HepG2 (cell line): ENCODE measurements at regions of chr21 and their contacts with region 1.

Region 1: GRCh38 chr21:41612674-41613532 is 104.9 kb upstream of the TMPRSS2 start:
- DNase-seq: peak; percentile 15
- ATAC-seq: peak; percentile 83
- H3K4me3 ChIP-seq: no peak overlapping the region
- H3K27ac ChIP-seq: no peak overlapping the region
- H3K4me1 ChIP-seq: peaks cover 11% of the 10 kb centered on the region
- H3K27me3 ChIP-seq: peaks cover 4 to 28% of the 10 kb centered on the region in 2 experiments; a peak in 3 of 5 replicates
- CTCF ChIP-seq: peak; percentile 87
- EP300 ChIP-seq: no peak
- POLR2A ChIP-seq: no peak
- RAD21 ChIP-seq: peak; percentile 75

Region 2: DNA sequence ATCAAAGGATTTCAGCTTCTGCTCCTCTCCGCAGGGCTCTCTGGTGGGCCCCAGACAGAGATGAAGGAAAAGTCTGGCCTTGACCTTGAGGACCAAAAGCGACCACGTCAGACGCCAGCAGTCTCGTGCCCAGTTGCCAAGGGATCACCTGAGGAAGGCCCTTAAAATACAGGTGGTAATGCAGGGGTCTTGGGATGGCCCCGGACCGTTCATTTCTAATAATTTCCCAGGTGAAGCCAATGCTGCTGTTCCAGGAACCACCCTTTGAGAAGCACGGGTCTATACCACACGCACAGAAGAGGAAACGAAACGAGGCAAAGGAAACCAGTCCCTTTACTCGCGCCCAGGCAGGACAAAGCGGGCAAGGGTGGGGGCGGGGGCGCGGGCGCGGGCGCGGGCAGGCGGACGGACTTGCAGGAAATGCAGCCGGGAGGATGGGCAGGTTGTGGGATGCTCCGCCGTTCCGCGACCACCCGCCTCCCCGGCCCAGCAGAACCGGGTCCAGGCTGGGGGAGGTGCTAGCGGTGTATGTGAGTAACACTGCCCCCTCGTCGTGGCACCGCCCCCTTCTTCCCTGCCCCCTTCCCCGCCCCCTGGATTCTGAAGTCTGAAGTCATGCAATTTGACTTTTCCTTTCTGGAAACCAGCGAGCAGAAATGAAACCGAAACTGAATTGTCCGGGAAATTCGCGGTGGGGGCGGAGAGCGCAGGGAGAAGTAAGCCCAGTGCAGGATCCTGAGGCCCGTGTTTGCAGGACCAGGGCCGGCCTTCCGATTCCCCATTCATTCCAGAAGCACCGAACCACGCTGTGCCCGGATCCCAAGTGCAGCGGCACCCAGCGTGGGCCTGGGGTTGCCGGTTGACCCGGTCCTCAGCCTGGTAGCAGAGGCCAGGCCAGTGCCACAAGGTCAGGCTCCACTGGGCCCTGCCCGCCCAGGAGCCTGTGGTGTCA is 192.7 kb before region 1 on chr21:
- CTCF ChIA-PET with region 1: no interaction called
- POLR2A ChIA-PET with region 1: no interaction called
- in situ Hi-C with region 1: no loop called
- intact Hi-C with region 1: no loop called
- DNase-seq: peak; percentile 69
- ATAC-seq: peak; percentile 85
- H3K4me3 ChIP-seq: peak overlapping the region; percentile 79 to 87 (median 82)
- H3K27ac ChIP-seq: peak overlapping the region; percentile 47
- H3K4me1 ChIP-seq: peaks cover 12% of the 10 kb centered on the region
- H3K27me3 ChIP-seq: no peaks in the 10 kb centered on the region; a peak in 1 of 5 replicates
- CTCF ChIP-seq: no peak
- EP300 ChIP-seq: no peak; a peak in 1 of 4 replicates
- POLR2A ChIP-seq: peak in 1 of 2 experiments; percentile 41; a peak in 1 of 4 replicates
- RAD21 ChIP-seq: no peak; the same call in 1 of the 2 replicates

Region 3: DNA sequence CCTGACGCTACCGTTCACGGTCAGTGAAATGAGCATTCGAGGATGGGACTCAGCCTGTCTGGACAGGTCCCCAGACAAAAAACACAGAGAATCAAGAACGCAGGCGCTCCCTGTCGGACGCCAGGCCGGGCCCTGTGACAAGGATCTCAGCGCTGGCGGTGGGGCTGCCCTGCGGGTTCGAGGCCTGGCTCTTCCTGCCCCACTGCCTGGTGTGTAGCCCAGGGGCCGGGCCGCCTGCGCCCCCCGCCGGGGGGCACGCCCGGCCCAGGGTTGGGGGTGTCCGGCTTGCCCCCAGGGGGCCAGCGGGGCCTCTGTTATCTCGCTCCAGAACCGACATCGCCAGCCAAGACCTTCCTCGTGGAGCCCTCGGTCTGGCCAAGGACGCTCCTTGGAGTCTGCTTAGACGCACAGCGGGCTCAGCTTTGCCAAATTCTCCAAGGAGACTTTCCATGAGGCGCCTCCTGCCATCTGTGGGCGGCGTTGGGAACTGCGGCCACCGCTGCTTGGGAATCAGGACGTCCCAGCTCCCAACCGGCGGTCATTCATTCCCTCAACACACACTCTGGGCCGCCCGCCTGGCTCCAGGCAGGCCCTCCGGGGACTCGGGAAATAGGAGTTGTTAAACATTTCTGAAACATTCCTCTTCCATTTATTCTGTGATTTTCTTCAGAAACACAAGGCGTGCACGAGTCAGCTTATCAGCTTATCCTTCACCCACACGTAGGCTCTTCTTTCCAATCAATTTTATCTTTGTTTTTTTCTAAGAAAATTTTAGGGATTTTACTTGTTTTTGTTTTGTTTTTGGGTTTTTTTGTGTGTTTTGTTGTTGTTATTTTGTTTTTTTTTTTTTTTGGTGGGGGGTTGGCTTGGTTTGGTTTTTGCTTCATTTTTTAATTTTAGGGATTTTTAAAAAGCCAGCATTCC is 165.3 kb after region 1 on chr21:
- CTCF ChIA-PET with region 1: interaction called, 51 read pairs
- POLR2A ChIA-PET with region 1: interaction called, 3 read pairs
- in situ Hi-C with region 1: loop called (anchors 5 kb)
- intact Hi-C with region 1: loop called (anchors 1 kb)
- DNase-seq: peak; percentile 51
- ATAC-seq: peak; percentile 75
- H3K4me3 ChIP-seq: no peak overlapping the region
- H3K27ac ChIP-seq: no peak overlapping the region
- H3K4me1 ChIP-seq: peaks cover 41% of the 10 kb centered on the region
- H3K27me3 ChIP-seq: peaks cover 4 to 36% of the 10 kb centered on the region in 2 experiments
- CTCF ChIP-seq: peak; percentile 90
- EP300 ChIP-seq: no peak
- POLR2A ChIP-seq: no peak
- RAD21 ChIP-seq: peak; percentile 89

Region 4: DNA sequence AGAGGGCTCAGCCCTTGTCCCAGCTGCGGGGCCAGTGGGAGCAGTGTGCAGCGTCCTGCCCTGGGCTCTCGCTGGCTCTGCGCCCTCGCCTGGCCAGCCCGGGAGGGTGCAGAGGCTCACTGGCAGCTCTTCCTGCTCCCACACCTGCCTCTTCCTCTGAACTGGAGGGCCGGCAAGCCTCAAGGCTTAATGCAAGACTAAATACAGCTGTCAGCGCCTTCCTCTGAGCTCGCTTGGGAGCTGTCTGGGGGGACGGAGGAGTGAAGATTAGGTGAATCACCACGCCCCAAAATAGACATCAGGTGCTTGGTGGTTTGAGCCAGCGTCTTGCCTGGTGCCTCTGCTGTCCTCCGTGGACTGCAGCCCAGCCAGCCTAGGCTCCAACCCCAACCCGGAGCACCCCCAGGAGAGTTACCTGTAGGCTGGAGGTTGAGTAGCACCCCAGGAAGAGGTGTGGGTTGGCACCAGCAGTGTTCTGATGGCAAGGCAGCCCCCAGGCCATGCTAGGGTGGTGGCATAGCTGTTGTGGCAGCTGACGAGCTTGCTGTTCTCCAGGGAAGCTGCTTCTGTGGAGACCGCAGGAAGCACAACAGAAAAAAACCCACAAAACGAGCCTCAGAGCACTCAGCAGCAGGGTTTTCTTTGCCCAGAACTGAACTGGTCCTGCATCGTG is 495.1 kb after region 1 on chr21:
- CTCF ChIA-PET with region 1: no interaction called
- POLR2A ChIA-PET with region 1: no interaction called
- in situ Hi-C with region 1: loop called (anchors 25 kb)
- intact Hi-C with region 1: loop called (anchors 10 kb)
- DNase-seq: peak; percentile 34
- ATAC-seq: peak; percentile 97
- H3K4me3 ChIP-seq: no peak overlapping the region
- H3K27ac ChIP-seq: no peak overlapping the region
- H3K4me1 ChIP-seq: peaks cover 9% of the 10 kb centered on the region
- H3K27me3 ChIP-seq: peaks cover 0 to 54% of the 10 kb centered on the region in 2 experiments; a peak in 3 of 5 replicates
- CTCF ChIP-seq: peak; percentile 91
- EP300 ChIP-seq: no peak
- POLR2A ChIP-seq: no peak
- RAD21 ChIP-seq: peak; percentile 72

Region 5: DNA sequence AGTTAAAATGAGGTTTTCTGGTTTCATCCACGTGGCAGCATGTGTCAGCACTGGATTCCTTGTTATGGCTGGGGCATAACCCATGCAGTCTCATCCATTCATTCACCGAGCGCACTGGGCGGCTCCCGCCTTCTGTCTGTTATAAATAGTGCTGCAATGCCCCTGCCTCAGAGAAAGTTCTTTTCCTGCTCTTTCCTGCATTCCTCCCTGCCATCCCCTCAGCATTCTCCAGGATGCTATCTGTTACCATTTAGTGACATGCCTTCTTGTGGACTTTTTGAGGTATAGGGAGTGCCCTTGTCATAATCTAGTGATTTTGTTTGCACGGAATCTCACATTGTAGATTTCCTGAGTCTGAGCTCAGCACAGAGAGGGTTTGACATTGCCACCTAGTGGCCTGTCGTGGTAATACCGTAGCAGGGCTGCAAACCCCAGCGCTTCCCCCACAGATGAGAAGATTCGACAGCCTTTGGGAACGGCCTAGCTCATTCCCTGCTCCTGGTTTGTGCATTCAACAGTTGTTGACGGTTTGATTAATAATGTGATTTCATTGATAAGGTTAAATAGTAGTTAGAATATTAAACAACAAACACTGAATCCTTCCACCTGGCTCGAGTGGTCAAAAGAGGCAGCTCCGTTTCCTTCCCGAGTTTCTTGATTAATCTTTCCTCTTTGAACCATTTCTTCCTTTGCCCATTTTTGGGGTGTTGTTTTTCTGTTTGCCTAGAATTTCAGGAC is 504.5 kb after region 1 on chr21:
- CTCF ChIA-PET with region 1: no interaction called
- POLR2A ChIA-PET with region 1: no interaction called
- in situ Hi-C with region 1: loop called (anchors 25 kb)
- intact Hi-C with region 1: loop called (anchors 10 kb)
- DNase-seq: peak; percentile 38
- ATAC-seq: peak; percentile 69
- H3K4me3 ChIP-seq: no peak overlapping the region
- H3K27ac ChIP-seq: no peak overlapping the region
- H3K4me1 ChIP-seq: peaks cover 61% of the 10 kb centered on the region
- H3K27me3 ChIP-seq: peaks cover 0 to 26% of the 10 kb centered on the region in 2 experiments; a peak in 4 of 5 replicates
- CTCF ChIP-seq: peak; percentile 87
- EP300 ChIP-seq: no peak
- POLR2A ChIP-seq: no peak
- RAD21 ChIP-seq: peak; percentile 61